H1 (cell line): ENCODE measurements at regions of chr18 and their contacts with region 1.

Region 1: DNA sequence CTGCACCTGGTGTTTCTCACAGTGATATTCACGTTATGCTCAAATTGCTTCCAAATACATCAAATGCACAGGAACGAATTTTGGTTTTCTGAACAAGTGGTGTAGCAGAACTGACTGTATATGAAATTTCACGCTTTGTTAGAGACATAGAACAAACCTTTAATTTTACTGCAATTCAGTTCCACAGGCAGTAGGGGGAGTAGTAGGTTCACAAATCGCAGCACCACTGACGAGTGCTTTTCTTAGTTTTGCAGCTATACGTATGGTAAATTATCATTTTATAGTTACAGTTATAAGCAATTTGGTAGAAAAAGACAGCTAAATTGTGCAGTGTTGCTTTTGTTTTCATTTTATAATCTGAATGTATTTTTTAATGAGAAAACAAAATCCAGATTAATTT is 113.3 kb downstream of the KIAA1328 start:
- DNase-seq: no peak
- H3K4me3 ChIP-seq: no peak overlapping the region
- H3K27ac ChIP-seq: no peak overlapping the region
- H3K4me1 ChIP-seq: peaks cover 0 to 15% (median 0%) of the 10 kb centered on the region in 4 experiments; a peak in 2 of 7 replicates
- H3K27me3 ChIP-seq: no peaks in the 10 kb centered on the region
- CTCF ChIP-seq: peak in 2 of 3 experiments; percentile 73 to 87; a peak in 3 of 4 replicates
- EP300 ChIP-seq: no peak
- POLR2A ChIP-seq: no peak
- RAD21 ChIP-seq: peak; percentile 96 to 97

Region 2: DNA sequence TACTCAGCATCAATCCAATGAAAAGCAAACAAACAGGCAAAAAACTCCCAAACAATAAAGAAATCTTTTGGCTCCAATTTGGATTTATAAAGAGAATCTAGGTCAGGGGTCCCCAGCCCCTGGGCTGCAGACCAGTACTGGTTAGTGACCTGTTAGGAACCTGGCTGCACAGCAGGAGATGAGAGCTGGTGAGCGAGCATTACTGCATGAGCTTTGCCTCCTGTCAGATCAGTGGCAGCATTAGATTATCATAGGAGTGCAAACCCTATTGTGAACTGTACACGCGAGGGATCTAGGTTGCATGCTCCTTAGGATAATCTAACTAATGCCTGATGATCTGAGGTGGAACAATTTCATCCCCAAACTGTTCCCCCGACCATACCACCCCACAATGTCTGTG is 11.2 kb before region 1 on chr18:
- CTCF ChIA-PET with region 1: interaction called, 13 read pairs
- POLR2A ChIA-PET with region 1: no interaction called
- DNase-seq: no peak
- H3K4me3 ChIP-seq: no peak overlapping the region
- H3K27ac ChIP-seq: no peak overlapping the region
- H3K4me1 ChIP-seq: peaks cover 0 to 4% (median 0%) of the 10 kb centered on the region in 4 experiments; a peak in 1 of 7 replicates
- H3K27me3 ChIP-seq: no peaks in the 10 kb centered on the region
- CTCF ChIP-seq: no peak
- EP300 ChIP-seq: no peak
- POLR2A ChIP-seq: no peak
- RAD21 ChIP-seq: no peak

Region 3: DNA sequence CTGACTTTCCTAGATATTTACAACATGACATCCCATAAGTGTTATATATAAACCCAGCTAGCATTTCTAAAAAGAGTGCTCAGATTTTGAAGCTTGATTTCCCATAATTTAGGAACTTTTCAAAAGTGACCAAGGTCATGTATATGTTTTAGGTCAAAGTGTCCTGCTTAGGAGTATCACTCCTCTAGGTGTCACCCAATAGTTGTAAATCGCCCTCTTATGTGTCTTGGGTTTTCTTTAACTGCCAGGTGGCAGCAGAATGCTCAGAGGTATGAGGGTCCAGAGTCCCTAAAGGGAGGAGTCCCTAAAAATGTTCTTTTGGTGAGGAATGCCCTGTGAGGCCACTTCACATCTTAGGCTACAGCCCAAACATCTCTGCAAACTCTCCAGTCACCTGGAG is 265.1 kb after region 1 on chr18:
- CTCF ChIA-PET with region 1: interaction called, 15 read pairs
- POLR2A ChIA-PET with region 1: no interaction called
- DNase-seq: no peak
- H3K4me3 ChIP-seq: no peak overlapping the region
- H3K27ac ChIP-seq: no peak overlapping the region
- H3K4me1 ChIP-seq: no peaks in the 10 kb centered on the region
- H3K27me3 ChIP-seq: no peaks in the 10 kb centered on the region
- CTCF ChIP-seq: peak in 2 of 3 experiments; percentile 52 to 84; a peak in 3 of 4 replicates
- EP300 ChIP-seq: no peak
- POLR2A ChIP-seq: no peak
- RAD21 ChIP-seq: peak; percentile 72 to 78

Region 4: GRCh38 chr18:37270038-37270665 is 327.9 kb after region 1 on chr18:
- CTCF ChIA-PET with region 1: interaction called, 19 read pairs
- POLR2A ChIA-PET with region 1: no interaction called
- DNase-seq: peak in 1 of 2 experiments; percentile 85
- H3K4me3 ChIP-seq: no peak overlapping the region
- H3K27ac ChIP-seq: no peak overlapping the region
- H3K4me1 ChIP-seq: no peaks in the 10 kb centered on the region
- H3K27me3 ChIP-seq: no peaks in the 10 kb centered on the region
- CTCF ChIP-seq: no peak
- EP300 ChIP-seq: no peak
- POLR2A ChIP-seq: no peak
- RAD21 ChIP-seq: no peak

Region 5: GRCh38 chr18:37314534-37314933 is 372.3 kb after region 1 on chr18:
- CTCF ChIA-PET with region 1: interaction called, 16 read pairs
- POLR2A ChIA-PET with region 1: no interaction called
- DNase-seq: no peak
- H3K4me3 ChIP-seq: no peak overlapping the region
- H3K27ac ChIP-seq: no peak overlapping the region
- H3K4me1 ChIP-seq: peaks cover 0 to 3% (median 0%) of the 10 kb centered on the region in 4 experiments; a peak in 3 of 7 replicates
- H3K27me3 ChIP-seq: no peaks in the 10 kb centered on the region
- CTCF ChIP-seq: peak in 2 of 3 experiments; percentile 30 to 36; a peak in 3 of 4 replicates
- EP300 ChIP-seq: no peak
- POLR2A ChIP-seq: no peak
- RAD21 ChIP-seq: peak; percentile 43 to 53

Region 6: GRCh38 chr18:37335409-37335736 is 393.1 kb after region 1 on chr18:
- CTCF ChIA-PET with region 1: interaction called, 18 read pairs
- POLR2A ChIA-PET with region 1: no interaction called
- DNase-seq: no peak
- H3K4me3 ChIP-seq: no peak overlapping the region
- H3K27ac ChIP-seq: no peak overlapping the region
- H3K4me1 ChIP-seq: peaks cover 0 to 4% (median 1%) of the 10 kb centered on the region in 4 experiments; a peak in 4 of 7 replicates
- H3K27me3 ChIP-seq: 0 out of 7 replicates have a peak, but pooled peaks cover 0 to 5% (median 0%) of the 10 kb centered on the region in 4 experiments
- CTCF ChIP-seq: peak; percentile 25 to 59 (median 44); a peak in 3 of 4 replicates
- EP300 ChIP-seq: no peak
- POLR2A ChIP-seq: no peak
- RAD21 ChIP-seq: peak; percentile 42 to 49